Mammary epithelial cell (primary cell): ENCODE measurements at regions of chr13 and their contacts with region 1.

Region 1: GRCh38 chr13:45417790-45418534 is at the start of gene SLC25A30:
- DNase-seq: peak; percentile 87
- H3K4me3 ChIP-seq: peak within 1 kb of the TSS; percentile 69 to 86 (median 80)
- H3K27ac ChIP-seq: peak within 1 kb of the TSS; percentile 63
- H3K4me1 ChIP-seq: peaks cover 7% of the 10 kb centered on the region
- H3K27me3 ChIP-seq: no peaks in the 10 kb centered on the region
- CTCF ChIP-seq: peak in 1 of 2 donors; percentile 0
- total RNA-seq, gene SLC25A30: 21.5 to 31.1 TPM

Region 2: GRCh38 chr13:45315488-45316167 is 102.3 kb before region 1 on chr13:
- CTCF ChIA-PET with region 1: no interaction called
- dilution Hi-C with region 1: no loop called
- in situ Hi-C with region 1: no loop called
- intact Hi-C with region 1: no loop called
- DNase-seq: no peak
- H3K4me3 ChIP-seq: no peak overlapping the region
- H3K27ac ChIP-seq: no peak overlapping the region
- H3K4me1 ChIP-seq: peaks cover 7% of the 10 kb centered on the region
- H3K27me3 ChIP-seq: no peaks in the 10 kb centered on the region
- CTCF ChIP-seq: no peak

Region 3: GRCh38 chr13:45464687-45465453 is 46.9 kb after region 1 on chr13 and contains the start of gene COG3:
- CTCF ChIA-PET with region 1: no interaction called
- dilution Hi-C with region 1: loop called (anchors 5 kb)
- in situ Hi-C with region 1: no loop called
- intact Hi-C with region 1: loop called (anchors 1 kb)
- DNase-seq: peak; percentile 98
- H3K4me3 ChIP-seq: peak within 1 kb of the TSS; percentile 75 to 98 (median 89)
- H3K27ac ChIP-seq: peak within 1 kb of the TSS; percentile 74
- H3K4me1 ChIP-seq: peaks cover 16% of the 10 kb centered on the region
- H3K27me3 ChIP-seq: no peaks in the 10 kb centered on the region
- CTCF ChIP-seq: peak in 1 of 2 donors; percentile 42
- total RNA-seq, gene COG3: 35.7 to 39.0 TPM

Region 4: DNA sequence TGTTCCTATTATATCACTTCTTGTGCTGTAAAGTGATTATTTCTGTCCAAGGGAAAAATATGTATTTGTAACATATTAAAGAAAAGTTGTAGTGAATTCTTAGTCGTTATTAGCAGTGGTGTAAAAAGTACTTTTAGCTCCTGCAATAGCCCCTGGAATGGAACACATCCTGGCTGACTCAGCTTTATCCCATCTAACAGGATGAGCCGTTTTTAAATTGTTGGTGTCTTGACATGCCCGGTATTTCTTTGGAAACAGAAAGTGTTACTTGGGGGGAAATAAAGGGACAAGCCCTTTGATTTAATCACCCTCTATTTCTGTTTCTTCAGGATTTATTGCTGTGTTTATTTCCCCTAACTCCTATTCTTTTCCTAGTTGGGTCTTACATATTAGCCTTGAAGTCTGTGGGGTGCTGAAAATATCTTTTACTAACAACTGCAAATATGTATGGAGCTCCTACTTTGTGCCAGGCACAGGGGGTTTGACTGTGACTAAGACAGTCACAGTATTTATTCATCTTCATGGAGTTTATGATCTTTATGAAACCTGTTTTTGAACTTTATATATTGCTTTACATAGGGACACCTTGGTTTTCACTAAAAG is 64.7 kb after region 1 on chr13:
- CTCF ChIA-PET with region 1: no interaction called
- dilution Hi-C with region 1: no loop called
- in situ Hi-C with region 1: no loop called
- intact Hi-C with region 1: loop called (anchors 5 kb)
- DNase-seq: peak; percentile 80
- H3K4me3 ChIP-seq: peak overlapping the region; percentile 24 to 38 (median 36)
- H3K27ac ChIP-seq: peak overlapping the region; percentile 96
- H3K4me1 ChIP-seq: peaks cover 26% of the 10 kb centered on the region
- H3K27me3 ChIP-seq: no peaks in the 10 kb centered on the region
- CTCF ChIP-seq: no peak

Region 5: GRCh38 chr13:45490068-45490467 is 72.1 kb after region 1 on chr13:
- CTCF ChIA-PET with region 1: no interaction called
- dilution Hi-C with region 1: no loop called
- in situ Hi-C with region 1: no loop called
- intact Hi-C with region 1: loop called (anchors 2 kb)
- DNase-seq: no peak
- H3K4me3 ChIP-seq: no peak overlapping the region
- H3K27ac ChIP-seq: no peak overlapping the region
- H3K4me1 ChIP-seq: no peaks in the 10 kb centered on the region
- H3K27me3 ChIP-seq: no peaks in the 10 kb centered on the region
- CTCF ChIP-seq: peak; percentile 41 to 50

Region 6: GRCh38 chr13:45500492-45501174 is 82.7 kb after region 1 on chr13:
- CTCF ChIA-PET with region 1: no interaction called
- dilution Hi-C with region 1: no loop called
- in situ Hi-C with region 1: loop called in 1 of 2 experiments (anchors 5 kb)
- intact Hi-C with region 1: no loop called
- DNase-seq: peak; percentile 96
- H3K4me3 ChIP-seq: peak overlapping the region in 1 of 3 experiments; percentile 28
- H3K27ac ChIP-seq: peak overlapping the region; percentile 96
- H3K4me1 ChIP-seq: peaks cover 32% of the 10 kb centered on the region
- H3K27me3 ChIP-seq: no peaks in the 10 kb centered on the region
- CTCF ChIP-seq: no peak